ENCODE measurements at regions of chr3 and their contacts with region 1.

Region 1: DNA sequence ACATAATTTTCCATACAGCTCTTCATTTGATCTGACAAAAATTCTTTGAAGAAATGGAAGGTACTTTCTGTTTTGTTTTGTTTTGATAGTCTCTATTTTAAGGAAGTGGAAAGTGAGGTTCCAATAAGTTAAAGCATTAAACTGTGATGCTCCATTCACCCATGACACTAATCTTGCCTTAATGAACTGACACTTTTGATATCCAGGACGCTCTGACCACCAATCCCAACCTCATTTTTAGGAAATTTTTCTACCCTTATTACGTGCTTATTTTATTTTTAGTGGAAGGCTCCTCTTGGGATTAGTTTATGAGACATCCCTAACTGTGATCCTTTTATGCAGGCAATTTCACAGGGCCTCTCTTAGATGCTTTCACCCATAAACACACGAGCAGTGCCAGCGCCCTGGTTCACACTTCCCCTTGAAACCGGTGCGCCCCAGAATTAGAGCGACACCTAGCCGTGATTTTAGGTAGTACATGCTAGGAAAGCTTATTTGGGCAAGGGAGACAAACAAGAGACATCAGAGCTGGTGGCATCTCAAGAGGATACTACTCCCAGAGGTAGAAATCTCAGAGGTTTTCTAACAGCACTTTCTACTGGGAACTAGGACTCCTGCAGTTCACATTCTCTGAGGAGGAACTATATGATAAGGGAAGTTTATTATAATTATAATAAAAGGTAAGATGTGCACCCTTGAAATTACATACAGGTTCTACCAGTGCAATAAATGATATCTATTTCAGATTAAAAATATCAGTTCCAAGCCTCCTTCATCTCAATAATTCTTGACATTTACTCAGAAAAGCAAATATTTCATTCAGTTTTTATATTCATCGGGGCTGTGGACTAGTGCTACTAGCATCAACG is 173.9 kb downstream of the SLC9A9 start:
- DNase-seq: peak; percentile 85
- ATAC-seq: peak; percentile 96
- H3K4me3 Mint-ChIP-seq: no peak overlapping the region
- H3K27ac Mint-ChIP-seq: peak overlapping the region; percentile 52
- H3K4me1 Mint-ChIP-seq: peaks cover 8% of the 10 kb centered on the region
- H3K27me3 Mint-ChIP-seq: no peaks in the 10 kb centered on the region

Region 2: GRCh38 chr3:143060906-143061305 is 613.4 kb before region 1 on chr3:
- CTCF ChIA-PET with region 1: interaction called, 3 read pairs
- POLR2A ChIA-PET with region 1: no interaction called
- intact Hi-C with region 1: loop called in 1 of 2 experiments (anchors 5 kb)
- DNase-seq: no peak
- ATAC-seq: peak; percentile 95
- H3K4me3 Mint-ChIP-seq: no peak overlapping the region
- H3K27ac Mint-ChIP-seq: peak overlapping the region; percentile 70
- H3K4me1 Mint-ChIP-seq: peaks cover 26% of the 10 kb centered on the region
- H3K27me3 Mint-ChIP-seq: no peaks in the 10 kb centered on the region

Region 3: GRCh38 chr3:143124601-143125520 is 549.5 kb before region 1 on chr3:
- CTCF ChIA-PET with region 1: interaction called, 11 read pairs
- POLR2A ChIA-PET with region 1: no interaction called
- intact Hi-C with region 1: loop called (anchors 1 to 2 kb)
- DNase-seq: no peak
- ATAC-seq: no peak
- H3K4me3 Mint-ChIP-seq: no peak overlapping the region
- H3K27ac Mint-ChIP-seq: no peak overlapping the region
- H3K4me1 Mint-ChIP-seq: peaks cover 41% of the 10 kb centered on the region
- H3K27me3 Mint-ChIP-seq: no peaks in the 10 kb centered on the region

Region 4: GRCh38 chr3:143252931-143253330 is 421.4 kb before region 1 on chr3:
- CTCF ChIA-PET with region 1: no interaction called
- POLR2A ChIA-PET with region 1: no interaction called
- intact Hi-C with region 1: no loop called
- DNase-seq: no peak
- ATAC-seq: no peak
- H3K4me3 Mint-ChIP-seq: no peak overlapping the region
- H3K27ac Mint-ChIP-seq: no peak overlapping the region
- H3K4me1 Mint-ChIP-seq: no peaks in the 10 kb centered on the region
- H3K27me3 Mint-ChIP-seq: no peaks in the 10 kb centered on the region

Region 5: GRCh38 chr3:143433787-143434378 is 240.5 kb before region 1 on chr3:
- CTCF ChIA-PET with region 1: interaction called, 6 read pairs
- POLR2A ChIA-PET with region 1: no interaction called
- intact Hi-C with region 1: loop called (anchors 1 to 10 kb)
- DNase-seq: peak; percentile 63
- ATAC-seq: peak; percentile 53
- H3K4me3 Mint-ChIP-seq: no peak overlapping the region
- H3K27ac Mint-ChIP-seq: no peak overlapping the region
- H3K4me1 Mint-ChIP-seq: no peaks in the 10 kb centered on the region
- H3K27me3 Mint-ChIP-seq: no peaks in the 10 kb centered on the region

Region 6: DNA sequence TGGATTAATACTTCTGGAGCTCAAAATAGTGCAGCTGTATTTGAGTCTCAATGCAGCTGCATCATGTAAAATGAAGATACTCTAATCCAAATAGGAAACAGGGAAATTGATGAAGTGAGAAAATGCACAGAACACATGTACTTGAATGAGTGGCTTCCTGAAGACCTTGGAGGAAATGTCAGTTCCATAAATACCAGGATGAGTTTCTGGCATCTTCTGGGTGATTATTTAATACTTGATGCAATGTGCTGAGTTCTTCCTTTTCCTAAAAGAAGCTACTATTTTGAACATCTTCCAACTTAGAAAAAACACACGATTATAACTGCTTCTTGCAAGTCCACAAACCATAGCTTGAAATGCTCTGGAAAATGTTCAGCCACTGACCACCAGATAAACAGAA is 11.2 kb after region 1 on chr3:
- CTCF ChIA-PET with region 1: interaction called, 26 read pairs
- POLR2A ChIA-PET with region 1: no interaction called
- intact Hi-C with region 1: no loop called
- DNase-seq: no peak
- ATAC-seq: no peak
- H3K4me3 Mint-ChIP-seq: no peak overlapping the region
- H3K27ac Mint-ChIP-seq: no peak overlapping the region
- H3K4me1 Mint-ChIP-seq: peaks cover 3% of the 10 kb centered on the region
- H3K27me3 Mint-ChIP-seq: no peaks in the 10 kb centered on the region

Region 7: GRCh38 chr3:143700431-143700975 is 26.2 kb after region 1 on chr3:
- CTCF ChIA-PET with region 1: interaction called, 10 read pairs
- POLR2A ChIA-PET with region 1: no interaction called
- intact Hi-C with region 1: no loop called
- DNase-seq: no peak
- ATAC-seq: peak; percentile 55
- H3K4me3 Mint-ChIP-seq: no peak overlapping the region
- H3K27ac Mint-ChIP-seq: no peak overlapping the region
- H3K4me1 Mint-ChIP-seq: peaks cover 3% of the 10 kb centered on the region
- H3K27me3 Mint-ChIP-seq: no peaks in the 10 kb centered on the region